H1 (cell line): ENCODE measurements at regions of chr2 and their contacts with region 1.

Region 1: GRCh38 chr2:206981739-206982340 is 42.5 kb downstream of the CPO start:
- DNase-seq: peak; percentile 56 to 78
- H3K4me3 ChIP-seq: no peak overlapping the region
- H3K27ac ChIP-seq: no peak overlapping the region
- H3K4me1 ChIP-seq: peaks cover 0 to 13% (median 12%) of the 10 kb centered on the region in 4 experiments; a peak in 5 of 7 replicates
- H3K27me3 ChIP-seq: no peaks in the 10 kb centered on the region
- CTCF ChIP-seq: peak; percentile 77 to 93 (median 86)
- EP300 ChIP-seq: no peak
- POLR2A ChIP-seq: no peak
- RAD21 ChIP-seq: peak; percentile 98

Region 2: GRCh38 chr2:206873423-206873822 is 108.4 kb before region 1 on chr2:
- CTCF ChIA-PET with region 1: no interaction called
- POLR2A ChIA-PET with region 1: no interaction called
- DNase-seq: no peak
- H3K4me3 ChIP-seq: no peak overlapping the region
- H3K27ac ChIP-seq: no peak overlapping the region
- H3K4me1 ChIP-seq: peaks cover 3 to 8% (median 5%) of the 10 kb centered on the region in 4 experiments; a peak in 5 of 7 replicates
- H3K27me3 ChIP-seq: no peaks in the 10 kb centered on the region
- CTCF ChIP-seq: no peak
- EP300 ChIP-seq: no peak
- POLR2A ChIP-seq: no peak
- RAD21 ChIP-seq: no peak

Region 3: GRCh38 chr2:206971805-206972204 is 10.0 kb before region 1 on chr2:
- CTCF ChIA-PET with region 1: interaction called, 14 read pairs
- POLR2A ChIA-PET with region 1: no interaction called
- DNase-seq: no peak
- H3K4me3 ChIP-seq: no peak overlapping the region
- H3K27ac ChIP-seq: no peak overlapping the region
- H3K4me1 ChIP-seq: peaks cover 0 to 8% (median 1%) of the 10 kb centered on the region in 4 experiments; a peak in 4 of 7 replicates
- H3K27me3 ChIP-seq: no peaks in the 10 kb centered on the region
- CTCF ChIP-seq: no peak
- EP300 ChIP-seq: no peak
- POLR2A ChIP-seq: no peak
- RAD21 ChIP-seq: no peak

Region 4: DNA sequence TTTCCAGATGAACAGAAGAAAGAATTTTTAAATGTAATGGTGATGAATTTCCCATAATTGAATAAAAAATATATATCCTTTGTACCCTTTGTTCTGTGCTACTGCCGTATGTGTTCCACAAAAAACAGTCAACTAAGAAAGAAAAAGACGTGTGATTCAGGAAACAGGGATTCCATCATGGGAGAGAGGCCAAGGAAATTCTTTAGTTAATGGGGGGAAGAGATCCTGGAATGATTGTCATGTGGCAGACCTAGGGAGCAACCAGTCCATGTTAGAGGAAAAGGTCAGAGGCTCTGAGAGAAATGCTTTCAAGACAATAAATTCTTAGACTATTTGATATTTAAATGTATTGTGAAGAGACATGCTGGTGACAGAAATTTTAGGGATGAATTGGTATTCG is 34.1 kb after region 1 on chr2:
- CTCF ChIA-PET with region 1: no interaction called
- POLR2A ChIA-PET with region 1: no interaction called
- DNase-seq: no peak
- H3K4me3 ChIP-seq: no peak overlapping the region
- H3K27ac ChIP-seq: no peak overlapping the region
- H3K4me1 ChIP-seq: peaks cover 0 to 1% (median under 1%) of the 10 kb centered on the region in 4 experiments; a peak in 1 of 7 replicates
- H3K27me3 ChIP-seq: no peaks in the 10 kb centered on the region
- CTCF ChIP-seq: no peak
- EP300 ChIP-seq: no peak
- POLR2A ChIP-seq: no peak
- RAD21 ChIP-seq: no peak

Region 5: GRCh38 chr2:207073801-207074678 is 92.2 kb after region 1 on chr2:
- CTCF ChIA-PET with region 1: interaction called, 30 read pairs
- POLR2A ChIA-PET with region 1: no interaction called
- DNase-seq: no peak
- H3K4me3 ChIP-seq: no peak overlapping the region
- H3K27ac ChIP-seq: no peak overlapping the region
- H3K4me1 ChIP-seq: peaks cover 0 to 5% (median 3%) of the 10 kb centered on the region in 4 experiments; a peak in 3 of 7 replicates
- H3K27me3 ChIP-seq: no peaks in the 10 kb centered on the region
- CTCF ChIP-seq: peak in 2 of 3 experiments; percentile 11 to 26; a peak in 2 of 4 replicates
- EP300 ChIP-seq: no peak
- POLR2A ChIP-seq: no peak
- RAD21 ChIP-seq: peak; percentile 39 to 58; a peak in 3 of 4 replicates